A673 (cell line): ENCODE measurements at regions of chr4 and their contacts with region 1.

Region 1: DNA sequence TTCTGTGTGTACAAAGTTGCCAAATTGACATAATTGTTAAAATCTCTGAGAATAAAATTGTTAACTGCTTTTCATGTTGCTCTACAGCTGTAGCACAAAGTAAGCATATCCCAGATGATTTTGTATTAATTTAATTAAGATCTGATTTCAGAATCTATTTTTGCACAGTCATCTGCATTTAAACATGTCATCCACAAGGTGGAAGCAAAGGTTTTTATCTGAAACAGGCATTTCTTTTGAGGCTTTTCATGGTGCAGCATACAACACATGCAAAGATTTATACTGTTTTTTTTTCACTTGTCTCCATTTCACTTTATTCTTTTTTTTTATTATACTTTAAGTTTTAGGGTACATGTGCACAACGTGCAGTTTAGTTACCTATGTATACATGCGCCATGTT is 51.2 kb downstream of the GC start:
- DNase-seq: peak; percentile 49
- H3K4me3 ChIP-seq: no peak overlapping the region
- H3K27ac ChIP-seq: no peak overlapping the region
- H3K4me1 ChIP-seq: no peaks in the 10 kb centered on the region
- H3K27me3 ChIP-seq: no peaks in the 10 kb centered on the region
- CTCF ChIP-seq: peak; percentile 56

Region 2: GRCh38 chr4:71689822-71690221 is 42.9 kb before region 1 on chr4:
- CTCF ChIA-PET with region 1: no interaction called
- POLR2A ChIA-PET with region 1: no interaction called
- intact Hi-C with region 1: no loop called
- DNase-seq: no peak
- H3K4me3 ChIP-seq: no peak overlapping the region
- H3K27ac ChIP-seq: no peak overlapping the region
- H3K4me1 ChIP-seq: no peaks in the 10 kb centered on the region
- H3K27me3 ChIP-seq: no peaks in the 10 kb centered on the region
- CTCF ChIP-seq: no peak

Region 3: GRCh38 chr4:71878376-71878775 is 145.7 kb after region 1 on chr4:
- CTCF ChIA-PET with region 1: no interaction called
- POLR2A ChIA-PET with region 1: no interaction called
- intact Hi-C with region 1: loop called (anchors 2 kb)
- DNase-seq: peak; percentile 84
- H3K4me3 ChIP-seq: no peak overlapping the region
- H3K27ac ChIP-seq: peak overlapping the region; percentile 92
- H3K4me1 ChIP-seq: peaks cover 42% of the 10 kb centered on the region
- H3K27me3 ChIP-seq: no peaks in the 10 kb centered on the region
- CTCF ChIP-seq: no peak

Region 4: GRCh38 chr4:71941001-71941400 is 208.3 kb after region 1 on chr4:
- CTCF ChIA-PET with region 1: no interaction called
- POLR2A ChIA-PET with region 1: no interaction called
- intact Hi-C with region 1: loop called (anchors 10 kb)
- DNase-seq: peak; percentile 45
- H3K4me3 ChIP-seq: no peak overlapping the region
- H3K27ac ChIP-seq: no peak overlapping the region
- H3K4me1 ChIP-seq: peaks cover 6% of the 10 kb centered on the region
- H3K27me3 ChIP-seq: no peaks in the 10 kb centered on the region
- CTCF ChIP-seq: peak; percentile 47

Region 5: DNA sequence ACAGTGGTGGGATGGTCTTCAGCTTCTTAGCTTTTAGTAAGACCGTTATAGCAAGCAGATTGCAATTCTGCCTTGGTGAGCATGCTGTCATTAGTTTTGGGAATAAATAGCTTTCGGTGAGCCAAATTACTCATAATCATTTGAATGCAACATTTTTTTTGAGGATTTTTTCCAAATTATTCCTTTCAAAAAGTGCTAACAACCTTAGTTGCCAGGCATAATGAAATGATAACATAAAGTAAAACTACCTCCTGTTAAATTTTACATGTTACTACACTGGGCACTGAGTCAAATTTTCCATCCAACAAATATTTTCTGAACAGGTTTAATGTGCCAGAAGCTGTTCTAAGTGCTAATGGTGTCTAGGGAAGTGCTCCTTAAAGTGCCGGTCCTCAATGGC is 283.3 kb after region 1 on chr4:
- CTCF ChIA-PET with region 1: interaction called, 13 read pairs
- POLR2A ChIA-PET with region 1: no interaction called
- intact Hi-C with region 1: no loop called
- DNase-seq: no peak
- H3K4me3 ChIP-seq: no peak overlapping the region
- H3K27ac ChIP-seq: no peak overlapping the region
- H3K4me1 ChIP-seq: no peaks in the 10 kb centered on the region
- H3K27me3 ChIP-seq: no peaks in the 10 kb centered on the region
- CTCF ChIP-seq: no peak

Region 6: GRCh38 chr4:72286185-72286584 is 553.5 kb after region 1 on chr4:
- CTCF ChIA-PET with region 1: no interaction called
- POLR2A ChIA-PET with region 1: no interaction called
- intact Hi-C with region 1: loop called (anchors 1 kb)
- DNase-seq: peak; percentile 32
- H3K4me3 ChIP-seq: no peak overlapping the region
- H3K27ac ChIP-seq: no peak overlapping the region
- H3K4me1 ChIP-seq: no peaks in the 10 kb centered on the region
- H3K27me3 ChIP-seq: no peaks in the 10 kb centered on the region
- CTCF ChIP-seq: peak; percentile 43